ENCODE measurements at regions of chr19 and their contacts with region 1.

Region 1: GRCh38 chr19:38929929-38930775 is at the start of gene SARS2:
- DNase-seq: peak; percentile 92
- H3K4me3 Mint-ChIP-seq: peak within 1 kb of the TSS; percentile 94
- H3K27ac Mint-ChIP-seq: peak within 1 kb of the TSS; percentile 97
- H3K4me1 Mint-ChIP-seq: peaks cover 29% of the 10 kb centered on the region
- H3K27me3 Mint-ChIP-seq: no peaks in the 10 kb centered on the region
- total RNA-seq, gene SARS2: 41.1 and 45.2 TPM in 2 replicates

Region 2: GRCh38 chr19:38729653-38730469 is 200.3 kb before region 1 on chr19:
- intact Hi-C with region 1: loop called (anchors 5 kb)
- DNase-seq: peak; percentile 65
- H3K4me3 Mint-ChIP-seq: no peak overlapping the region
- H3K27ac Mint-ChIP-seq: peak overlapping the region; percentile 53
- H3K4me1 Mint-ChIP-seq: peaks cover 21% of the 10 kb centered on the region
- H3K27me3 Mint-ChIP-seq: no peaks in the 10 kb centered on the region

Region 3: DNA sequence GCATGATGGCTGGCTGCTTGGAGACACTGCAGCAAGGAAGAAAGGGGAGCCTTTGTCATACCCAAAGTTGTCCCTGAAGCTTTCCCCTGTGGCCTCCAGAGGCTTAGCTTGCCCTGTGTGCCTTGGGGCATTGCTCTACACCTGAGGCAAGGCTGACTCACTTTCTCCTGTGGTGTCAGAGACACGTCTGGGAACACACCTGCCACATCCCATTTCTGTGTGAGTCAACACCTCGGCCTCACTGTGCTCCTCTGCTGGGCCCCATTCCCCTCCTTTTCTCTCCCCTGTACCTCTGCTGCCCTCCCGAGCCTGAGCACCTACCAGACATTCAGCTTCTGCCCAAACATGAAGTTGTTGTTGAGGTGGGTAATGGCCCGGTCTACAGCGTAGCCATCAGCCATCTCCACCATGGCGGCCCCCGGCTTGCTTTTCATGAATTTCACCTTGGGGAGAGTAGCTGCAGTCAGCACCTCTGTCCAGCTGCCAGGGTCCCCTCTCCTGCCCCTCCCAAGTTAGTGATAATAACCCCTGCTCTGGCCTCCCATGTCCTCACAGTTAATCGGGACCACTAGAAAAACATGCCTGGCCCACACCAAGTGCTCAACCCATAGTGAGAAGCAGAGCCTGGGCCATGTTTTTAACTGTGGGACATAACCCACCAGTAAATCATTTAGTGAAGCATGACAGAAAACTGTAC is 91.4 kb before region 1 on chr19:
- intact Hi-C with region 1: no loop called
- DNase-seq: no peak
- H3K4me3 Mint-ChIP-seq: no peak overlapping the region
- H3K27ac Mint-ChIP-seq: peak overlapping the region; percentile 58
- H3K4me1 Mint-ChIP-seq: peaks cover 44% of the 10 kb centered on the region
- H3K27me3 Mint-ChIP-seq: no peaks in the 10 kb centered on the region

Region 4: DNA sequence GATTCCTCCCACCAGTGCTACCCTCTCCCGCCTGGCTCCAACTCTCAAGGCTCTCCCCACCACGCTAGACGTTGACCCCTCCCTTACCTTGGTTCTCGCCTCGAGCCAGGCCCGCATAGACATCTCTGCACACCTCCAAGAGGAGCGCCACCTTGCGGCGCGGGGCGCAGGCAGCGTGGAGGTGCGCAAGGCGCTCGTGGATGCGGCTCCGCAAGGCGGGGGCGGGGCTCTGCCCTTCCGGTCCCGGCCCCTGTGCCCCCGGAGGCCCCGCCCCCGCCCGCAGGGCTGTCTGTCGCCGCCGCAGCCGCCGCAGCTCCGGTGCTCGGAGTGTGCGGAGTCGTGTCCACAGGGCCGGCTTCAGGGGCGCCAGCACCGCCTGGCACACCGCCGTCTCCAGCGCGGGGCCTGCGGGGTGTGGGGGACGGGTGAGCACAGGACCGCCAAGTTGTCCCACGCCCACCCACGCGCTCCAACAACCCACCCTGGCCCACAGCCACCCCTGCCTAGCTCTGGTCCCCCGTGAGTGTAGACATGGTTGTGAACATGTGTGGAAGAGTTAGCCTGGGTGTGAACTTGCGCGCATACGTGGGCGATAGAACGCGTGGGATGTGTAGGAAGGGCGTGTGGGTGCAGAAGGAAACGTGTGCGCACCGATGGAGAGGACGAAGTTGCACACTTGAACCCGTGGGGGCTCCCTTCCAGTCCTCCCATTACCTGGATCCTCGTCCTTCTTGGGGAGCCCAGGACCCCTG is 60.1 kb before region 1 on chr19:
- intact Hi-C with region 1: no loop called
- DNase-seq: peak; percentile 91
- H3K4me3 Mint-ChIP-seq: peak overlapping the region; percentile 83
- H3K27ac Mint-ChIP-seq: peak overlapping the region; percentile 82
- H3K4me1 Mint-ChIP-seq: peaks cover 28% of the 10 kb centered on the region
- H3K27me3 Mint-ChIP-seq: no peaks in the 10 kb centered on the region

Region 5: DNA sequence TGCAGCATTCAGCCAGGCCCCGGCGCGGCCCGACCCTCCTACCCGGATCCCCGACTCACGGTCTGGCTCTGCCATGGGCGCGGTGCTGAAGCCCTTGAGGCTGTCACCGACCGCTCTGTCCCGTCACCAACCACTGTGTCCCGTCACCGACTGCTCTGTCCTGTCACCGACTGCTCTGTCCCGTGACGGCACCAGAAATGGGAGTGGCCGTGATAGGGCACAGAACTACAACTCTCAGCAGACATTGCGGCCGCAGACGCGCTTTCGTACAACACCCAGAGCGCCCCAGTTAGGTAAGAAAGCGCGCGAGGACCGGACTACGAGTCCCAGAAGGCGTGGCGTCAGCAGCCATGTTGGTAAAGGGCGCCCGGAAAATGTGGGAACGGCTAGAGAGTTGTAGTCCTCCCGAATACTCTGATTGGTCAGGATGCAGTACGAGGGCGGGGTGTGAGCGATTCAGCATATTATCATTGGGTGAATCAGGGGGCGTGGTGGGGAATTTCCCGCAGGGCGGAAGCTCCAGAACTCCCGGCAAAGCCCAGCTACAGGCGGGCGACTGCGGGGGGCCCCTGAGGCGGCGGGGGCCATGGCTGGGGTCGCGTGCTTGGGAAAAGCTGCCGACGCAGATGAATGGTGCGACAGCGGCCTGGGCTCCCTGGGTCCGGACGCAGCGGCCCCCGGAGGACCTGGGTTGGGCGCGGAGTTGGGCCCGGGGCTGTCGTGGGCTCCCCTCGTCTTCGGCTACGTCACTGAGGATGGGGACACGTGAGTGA is 30.5 kb before region 1 on chr19 and contains the starts of genes NFKBIB and SIRT2:
- intact Hi-C with region 1: loop called (anchors 1 kb)
- DNase-seq: peak; percentile 100
- H3K4me3 Mint-ChIP-seq: peak within 1 kb of the TSS; percentile 90
- H3K27ac Mint-ChIP-seq: peak within 1 kb of the TSS; percentile 85
- H3K4me1 Mint-ChIP-seq: peaks cover 15% of the 10 kb centered on the region
- H3K27me3 Mint-ChIP-seq: no peaks in the 10 kb centered on the region
- total RNA-seq, gene NFKBIB: 81.8 and 82.7 TPM in 2 replicates
- total RNA-seq, gene SIRT2: 29.0 and 30.2 TPM in 2 replicates